ENCODE measurements at regions of chr1 and their contacts with region 1.

Region 1: GRCh38 chr1:11719313-11720032 is 16.5 kb upstream of the AGTRAP start:
- DNase-seq: no peak
- H3K4me3 ChIP-seq: peak overlapping the region; percentile 41; the same call in 1 of the 2 replicates
- H3K27ac ChIP-seq: no peak overlapping the region
- H3K27me3 ChIP-seq: peaks cover 20% of the 10 kb centered on the region
- CTCF ChIP-seq: peak; percentile 99

Region 2: GRCh38 chr1:11708554-11709350 is 10.7 kb before region 1 on chr1:
- CTCF ChIA-PET with region 1: interaction called, 17 read pairs
- POLR2A ChIA-PET with region 1: no interaction called
- DNase-seq: no peak
- H3K4me3 ChIP-seq: no peak overlapping the region
- H3K27ac ChIP-seq: no peak overlapping the region
- H3K27me3 ChIP-seq: peaks cover 12% of the 10 kb centered on the region
- CTCF ChIP-seq: no peak

Region 3: GRCh38 chr1:11735854-11736745 is 16.6 kb after region 1 on chr1 and contains the start of gene AGTRAP:
- CTCF ChIA-PET with region 1: interaction called, 15 read pairs
- POLR2A ChIA-PET with region 1: interaction called, 3 read pairs
- DNase-seq: peak; percentile 67
- H3K4me3 ChIP-seq: peak within 1 kb of the TSS; percentile 100
- H3K27ac ChIP-seq: peak within 1 kb of the TSS; percentile 93
- H3K27me3 ChIP-seq: no peaks in the 10 kb centered on the region
- CTCF ChIP-seq: 0 out of 2 replicates have a peak, but pooled peaks have one; percentile 5
- polyA plus RNA-seq, gene AGTRAP: 26.8 and 39.0 TPM in 2 replicates

Region 4: DNA sequence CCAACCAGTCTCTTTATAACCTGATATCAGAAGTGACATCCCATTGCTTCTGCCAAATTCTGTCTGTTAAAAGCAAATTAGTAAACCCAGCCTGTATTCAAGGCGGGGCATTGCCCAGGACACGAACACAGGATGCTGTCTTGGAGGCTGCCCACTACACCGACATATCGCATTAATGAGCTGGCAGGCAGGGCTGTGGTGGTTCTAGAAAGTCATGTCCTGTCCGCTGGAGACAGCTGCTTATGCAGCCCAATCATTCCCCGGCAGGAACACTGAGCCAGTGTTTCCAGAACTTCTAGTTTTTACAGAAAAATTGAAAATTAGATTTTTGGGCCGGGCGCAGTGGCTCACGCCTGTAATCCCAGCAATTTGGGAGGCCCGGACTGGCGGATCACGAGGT is 61.8 kb after region 1 on chr1:
- CTCF ChIA-PET with region 1: no interaction called
- POLR2A ChIA-PET with region 1: no interaction called
- DNase-seq: no peak
- H3K4me3 ChIP-seq: no peak overlapping the region
- H3K27ac ChIP-seq: no peak overlapping the region
- H3K27me3 ChIP-seq: no peaks in the 10 kb centered on the region
- CTCF ChIP-seq: no peak